Panc1 (cell line): ENCODE measurements at regions of chr2 and their contacts with region 1.

Region 1: DNA sequence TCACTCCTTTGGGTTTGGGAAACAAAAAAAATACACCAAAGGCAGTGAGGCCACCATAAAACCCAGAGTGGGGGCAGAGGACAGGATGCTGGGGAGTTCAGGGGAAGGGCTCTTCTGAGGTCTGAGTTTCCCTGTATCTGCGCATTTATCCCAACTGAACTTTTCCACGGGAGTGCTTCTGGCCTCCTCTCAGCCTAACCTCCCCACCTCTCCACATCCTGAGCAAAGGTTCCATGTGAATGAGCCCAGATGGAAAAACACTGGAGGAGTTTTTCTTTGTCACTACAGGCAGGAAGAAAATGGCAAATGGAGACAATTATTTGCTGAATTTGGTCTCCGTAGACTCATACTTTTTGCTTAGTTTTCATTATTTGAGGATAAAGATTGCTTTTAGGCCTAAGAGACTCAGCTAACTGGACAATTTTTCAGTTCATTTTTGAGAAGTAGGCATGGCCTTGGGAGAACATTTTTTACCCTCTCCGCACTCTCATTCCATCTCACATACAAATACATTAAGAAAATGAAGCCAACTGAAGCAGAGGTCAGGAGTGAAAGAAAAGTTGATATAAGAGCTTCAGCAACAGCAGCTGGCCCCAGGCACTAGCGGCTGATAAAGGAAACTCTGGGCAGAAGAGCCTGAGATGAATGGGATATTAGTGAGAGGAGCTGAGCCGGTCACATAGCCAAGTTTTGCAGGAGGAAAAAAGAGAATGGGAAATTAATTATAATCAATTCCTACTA is 82.6 kb upstream of the CYP1B1 start:
- DNase-seq: no peak
- ATAC-seq: no peak
- H3K4me3 ChIP-seq: no peak overlapping the region
- H3K27ac ChIP-seq: no peak overlapping the region
- H3K4me1 ChIP-seq: no peaks in the 10 kb centered on the region
- H3K27me3 ChIP-seq: no peaks in the 10 kb centered on the region
- CTCF ChIP-seq: no peak

Region 2: GRCh38 chr2:37453027-37453426 is 705.5 kb before region 1 on chr2:
- CTCF ChIA-PET with region 1: no interaction called
- POLR2A ChIA-PET with region 1: interaction called, 11 read pairs
- in situ Hi-C with region 1: no loop called
- intact Hi-C with region 1: no loop called
- DNase-seq: no peak
- ATAC-seq: no peak
- H3K4me3 ChIP-seq: no peak overlapping the region
- H3K27ac ChIP-seq: no peak overlapping the region
- H3K4me1 ChIP-seq: no peaks in the 10 kb centered on the region
- H3K27me3 ChIP-seq: no peaks in the 10 kb centered on the region
- CTCF ChIP-seq: no peak

Region 3: GRCh38 chr2:38128653-38129052 is 29.9 kb before region 1 on chr2:
- CTCF ChIA-PET with region 1: no interaction called
- POLR2A ChIA-PET with region 1: no interaction called
- in situ Hi-C with region 1: no loop called
- intact Hi-C with region 1: no loop called
- DNase-seq: no peak
- ATAC-seq: no peak
- H3K4me3 ChIP-seq: no peak overlapping the region
- H3K27ac ChIP-seq: no peak overlapping the region
- H3K4me1 ChIP-seq: no peaks in the 10 kb centered on the region
- H3K27me3 ChIP-seq: no peaks in the 10 kb centered on the region
- CTCF ChIP-seq: no peak

Region 4: DNA sequence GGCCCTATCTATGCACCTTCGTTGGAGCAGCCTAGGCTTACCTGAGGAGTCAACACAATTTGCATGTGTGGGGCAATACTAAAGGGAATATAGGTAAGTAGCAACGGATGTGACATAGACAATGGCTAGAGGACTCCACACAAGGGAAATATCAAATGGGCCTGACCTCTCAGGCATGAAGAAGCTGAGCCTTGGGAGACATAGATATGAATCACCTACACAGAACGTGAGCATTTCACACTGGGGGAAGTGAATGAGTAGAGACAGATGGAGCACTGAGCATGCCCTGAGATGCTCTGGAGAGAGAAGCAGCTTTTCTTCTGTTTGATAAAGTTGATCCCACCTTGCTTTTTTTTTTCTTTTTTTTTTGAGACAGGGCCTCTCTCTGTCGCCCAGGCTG is 120.7 kb after region 1 on chr2:
- CTCF ChIA-PET with region 1: no interaction called
- POLR2A ChIA-PET with region 1: no interaction called
- in situ Hi-C with region 1: no loop called
- intact Hi-C with region 1: no loop called
- DNase-seq: no peak
- ATAC-seq: no peak
- H3K4me3 ChIP-seq: no peak overlapping the region
- H3K27ac ChIP-seq: no peak overlapping the region
- H3K4me1 ChIP-seq: no peaks in the 10 kb centered on the region
- H3K27me3 ChIP-seq: peaks cover 4% of the 10 kb centered on the region; the same call in 1 of the 2 replicates
- CTCF ChIP-seq: no peak